HEK293 (cell line): ENCODE measurements at regions of chr2 and their contacts with region 1.

Region 1: DNA sequence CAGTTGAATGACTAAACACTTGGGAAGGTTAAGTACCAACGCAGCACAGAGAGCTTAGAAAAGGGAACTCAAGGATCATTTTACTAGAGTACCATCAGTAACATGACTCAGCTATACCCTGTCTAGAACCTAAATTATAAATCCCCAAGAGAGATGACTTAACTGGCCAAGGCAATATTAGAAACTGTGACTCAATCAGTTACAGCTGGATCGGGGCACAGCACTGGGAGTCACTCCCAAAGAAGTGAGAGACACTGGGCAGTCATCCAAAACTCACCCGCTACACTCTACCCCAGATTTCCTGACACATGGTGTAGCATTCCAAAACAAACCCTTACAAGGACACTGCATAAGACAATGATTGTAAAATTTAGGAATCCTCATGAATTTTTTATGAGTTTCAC is 17.7 kb downstream of the IWS1 start:
- H3K4me3 ChIP-seq: no peak overlapping the region
- H3K27ac ChIP-seq: no peak overlapping the region
- H3K4me1 ChIP-seq: peaks cover 20% of the 10 kb centered on the region
- CTCF ChIP-seq: no peak

Region 2: DNA sequence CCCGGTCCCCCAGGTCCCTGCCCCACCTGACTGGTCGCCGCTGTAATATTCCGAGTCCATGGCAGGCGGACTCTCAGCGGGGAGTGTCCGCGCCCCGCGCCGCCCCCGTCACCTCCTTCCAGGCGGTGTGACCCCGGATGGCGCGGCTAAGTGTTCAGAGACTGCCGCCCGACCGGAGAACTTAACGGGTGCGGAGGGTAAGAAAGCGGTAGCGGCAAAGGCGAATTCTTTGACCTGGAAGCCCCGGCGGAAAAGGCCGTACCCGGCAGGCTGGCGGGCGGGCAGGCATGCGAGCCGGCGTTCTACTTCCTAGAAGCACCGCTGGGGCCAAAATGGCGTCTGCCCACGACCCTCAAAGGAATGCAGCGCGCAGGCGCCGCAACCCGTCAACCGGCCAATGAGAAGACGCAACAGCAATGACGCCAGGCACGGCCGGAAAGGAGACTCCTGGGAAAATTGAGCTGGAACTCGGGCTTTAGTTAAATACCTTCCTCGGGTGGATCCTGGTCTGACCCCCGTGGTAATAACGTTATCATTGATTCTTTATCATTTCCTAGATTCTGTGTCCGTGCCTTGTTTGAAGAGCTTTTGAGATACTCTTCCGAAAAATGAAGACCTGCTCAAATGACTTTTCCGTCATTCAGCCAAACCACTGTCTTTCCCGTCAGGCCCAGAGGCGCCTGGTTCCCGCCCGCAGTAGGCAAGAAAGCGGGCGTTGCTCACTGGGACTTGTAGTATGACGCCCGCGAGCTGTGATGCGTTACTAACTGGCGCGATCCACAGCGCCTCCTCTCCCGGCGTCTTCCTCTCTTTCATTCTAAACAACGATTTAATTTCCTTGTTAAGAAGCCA is 17.7 kb after region 1 on chr2 and contains the start of gene IWS1:
- CTCF ChIA-PET with region 1: interaction called, 3 read pairs
- POLR2A ChIA-PET with region 1: interaction called, 19 read pairs
- H3K4me3 ChIP-seq: peak within 1 kb of the TSS; percentile 88
- H3K27ac ChIP-seq: peak within 1 kb of the TSS; percentile 73
- H3K4me1 ChIP-seq: peaks cover 4% of the 10 kb centered on the region; the same call in 1 of the 2 replicates
- CTCF ChIP-seq: no peak; the same call in none of the 2 replicates